Activated CD4-positive, alpha-beta memory T cell treated with anti-CD3 and anti-CD28 coated beads for 36 hours (primary cell): ENCODE measurements at regions of chr10 and their contacts with region 1.

Region 1: DNA sequence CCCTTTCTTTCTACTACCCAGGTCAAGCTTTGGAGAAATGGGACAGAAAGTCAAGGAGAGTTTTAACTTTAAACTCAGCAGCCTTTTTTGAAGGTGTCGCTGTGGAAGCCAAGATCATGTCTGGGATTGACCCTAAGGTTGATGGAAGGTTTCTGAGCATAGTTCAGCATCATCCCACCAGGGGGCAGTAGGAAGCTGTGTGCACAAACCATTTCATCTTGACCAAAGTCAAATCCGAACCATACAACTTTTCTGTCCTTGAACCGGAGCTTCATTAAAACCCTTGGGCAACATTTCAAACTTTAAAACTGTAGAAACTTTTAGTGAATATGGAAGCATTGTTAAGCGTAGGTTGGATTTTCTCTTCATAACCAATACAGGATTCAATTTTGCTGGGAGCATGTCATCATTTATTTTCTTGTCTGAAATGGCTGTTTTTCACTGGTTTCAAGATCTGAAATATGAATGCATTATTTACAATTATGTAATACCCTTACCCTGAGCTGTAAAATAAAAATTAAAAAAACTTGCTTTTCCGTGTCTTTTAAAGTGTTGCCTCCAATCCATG is 214.4 kb upstream of the KIAA1217 start:
- DNase-seq: peak; percentile 43
- H3K4me3 Mint-ChIP-seq: no peak overlapping the region
- H3K27ac Mint-ChIP-seq: no peak overlapping the region
- H3K4me1 Mint-ChIP-seq: no peaks in the 10 kb centered on the region
- H3K27me3 Mint-ChIP-seq: peaks cover 4% of the 10 kb centered on the region

Region 2: DNA sequence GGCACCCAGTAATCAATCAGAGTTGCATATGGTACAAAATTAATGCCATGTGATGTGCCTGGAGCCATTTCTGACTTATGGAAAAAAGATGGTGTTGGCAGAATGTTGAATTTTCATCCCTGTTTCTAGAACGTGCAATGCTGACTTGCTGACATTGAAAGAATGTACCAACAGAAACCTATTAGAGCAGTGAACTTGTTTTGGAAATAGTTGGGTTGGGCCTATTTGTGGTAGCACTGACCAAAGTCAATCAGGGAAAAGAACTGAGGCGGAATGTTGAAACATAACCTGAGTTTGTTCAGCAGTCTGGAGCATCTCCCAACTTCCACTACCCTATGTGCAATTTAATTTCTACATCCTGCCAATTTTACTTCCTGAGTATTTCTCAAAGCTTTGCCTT is 202.7 kb after region 1 on chr10:
- CTCF ChIA-PET with region 1: interaction called, 5 read pairs
- POLR2A ChIA-PET with region 1: no interaction called
- intact Hi-C with region 1: loop called (anchors 1 kb)
- DNase-seq: no peak
- H3K4me3 Mint-ChIP-seq: no peak overlapping the region
- H3K27ac Mint-ChIP-seq: no peak overlapping the region
- H3K4me1 Mint-ChIP-seq: no peaks in the 10 kb centered on the region
- H3K27me3 Mint-ChIP-seq: peaks cover 9% of the 10 kb centered on the region

Region 3: DNA sequence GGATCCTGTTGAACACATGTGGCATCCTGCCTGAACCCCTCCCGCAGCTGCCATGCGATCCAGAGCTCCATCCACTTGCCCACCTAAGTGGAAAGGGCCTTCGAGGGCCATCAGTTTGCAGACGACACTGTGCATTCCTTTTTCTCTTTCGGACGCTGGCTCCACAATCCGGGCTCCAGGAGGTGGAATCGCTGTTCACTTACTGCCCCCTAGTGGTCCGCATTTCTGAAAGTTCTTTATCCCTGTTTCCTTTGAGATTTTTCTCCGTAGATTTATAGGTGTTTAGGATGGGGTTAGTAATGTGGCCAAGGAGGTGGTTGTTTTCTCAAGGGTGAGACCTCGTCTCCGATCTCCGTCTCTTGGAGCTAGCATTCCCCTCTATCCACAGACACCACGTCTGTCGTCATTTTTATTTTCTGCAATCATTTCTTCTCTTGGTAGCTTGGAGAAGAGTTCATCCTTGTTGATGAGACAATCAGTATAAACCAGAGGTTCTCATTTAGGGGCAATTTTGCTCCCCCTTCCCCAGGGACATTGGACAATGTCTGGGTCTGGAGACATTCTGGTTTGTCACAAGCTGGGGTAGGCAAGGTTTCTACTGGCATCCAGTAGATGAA is 524.5 kb after region 1 on chr10:
- CTCF ChIA-PET with region 1: interaction called, 22 read pairs
- POLR2A ChIA-PET with region 1: no interaction called
- intact Hi-C with region 1: loop called (anchors 1 kb)
- DNase-seq: peak; percentile 46
- H3K4me3 Mint-ChIP-seq: no peak overlapping the region
- H3K27ac Mint-ChIP-seq: no peak overlapping the region
- H3K4me1 Mint-ChIP-seq: peaks cover 11% of the 10 kb centered on the region
- H3K27me3 Mint-ChIP-seq: peaks cover 7% of the 10 kb centered on the region